Sigmoid colon (tissue), 7 donors: ENCODE measurements at regions of chr7 and their contacts with region 1.

Region 1: GRCh38 chr7:44123190-44124003 is at the start of gene POLD2:
- DNase-seq: peak; percentile 99
- H3K4me3 ChIP-seq: peak within 1 kb of the TSS; percentile 65 to 80 (median 69)
- H3K27ac ChIP-seq: peak within 1 kb of the TSS; percentile 83 to 92 (median 89)
- H3K4me1 ChIP-seq: peaks cover 0 to 19% (median 12%) of the 10 kb centered on the region in 4 donors
- H3K27me3 ChIP-seq: no peaks in the 10 kb centered on the region
- CTCF ChIP-seq: no peak
- EP300 ChIP-seq: no peak
- POLR2A ChIP-seq: peak; percentile 43 to 55
- total RNA-seq, gene POLD2: 20.3 to 40.5 (median 29.5) TPM

Region 2: DNA sequence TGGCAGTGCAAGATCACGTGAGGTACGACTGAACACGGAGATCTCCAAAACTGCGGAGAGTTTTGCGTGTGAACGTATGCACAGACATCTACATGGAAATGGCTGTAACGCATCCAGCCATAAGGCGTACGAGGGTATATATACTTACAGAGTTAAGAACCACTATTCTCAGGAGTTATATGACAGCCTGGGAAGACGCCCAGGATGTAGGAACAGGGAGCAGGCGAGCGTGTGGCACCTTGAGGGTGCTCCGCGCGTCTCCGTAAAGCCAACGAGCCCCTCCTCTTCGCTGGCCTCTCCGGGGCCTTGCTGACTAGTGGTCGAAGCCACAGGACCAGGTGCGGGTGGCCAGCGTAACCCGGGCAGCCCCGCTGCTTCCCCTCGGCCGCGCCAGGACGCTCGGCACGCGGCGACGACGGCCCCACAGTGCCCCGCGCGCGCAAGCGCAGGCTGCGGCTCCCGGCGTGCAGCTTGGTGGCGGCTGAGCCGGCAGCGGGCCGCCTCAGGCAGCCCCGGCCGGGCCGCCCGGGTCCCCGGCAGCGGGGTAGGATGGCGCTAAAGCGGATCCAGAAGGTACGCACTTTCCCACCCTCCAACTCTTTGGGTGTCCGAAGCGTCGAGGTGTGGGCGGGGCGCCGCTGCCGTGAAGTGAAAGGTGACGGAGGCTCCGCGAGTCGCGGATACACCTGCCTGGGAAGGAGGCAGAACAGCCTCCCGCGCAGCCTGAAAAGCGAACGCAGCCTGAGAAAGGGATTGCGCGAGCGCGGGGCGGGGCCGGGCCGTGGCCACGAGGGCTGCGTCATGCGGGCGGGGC is 197.2 kb before region 1 on chr7 and contains the start of gene UBE2D4:
- intact Hi-C with region 1: loop called (anchors 5 kb)
- DNase-seq: peak; percentile 93
- H3K4me3 ChIP-seq: peak within 1 kb of the TSS; percentile 49 to 66 (median 64)
- H3K27ac ChIP-seq: peak within 1 kb of the TSS; percentile 86 to 95 (median 92)
- H3K4me1 ChIP-seq: peaks cover 0 to 19% (median 12%) of the 10 kb centered on the region in 4 donors
- H3K27me3 ChIP-seq: no peaks in the 10 kb centered on the region
- CTCF ChIP-seq: no peak
- EP300 ChIP-seq: no peak
- POLR2A ChIP-seq: peak; percentile 95 to 96
- total RNA-seq, gene UBE2D4: 24.0 to 37.1 (median 28.5) TPM

Region 3: GRCh38 chr7:44072364-44073231 is 50.8 kb before region 1 on chr7:
- intact Hi-C with region 1: no loop called
- DNase-seq: peak; percentile 90
- H3K4me3 ChIP-seq: no peak overlapping the region
- H3K27ac ChIP-seq: peak overlapping the region; percentile 60 to 77 (median 62)
- H3K4me1 ChIP-seq: peaks cover 0 to 26% (median 24%) of the 10 kb centered on the region in 4 donors
- H3K27me3 ChIP-seq: no peaks in the 10 kb centered on the region
- CTCF ChIP-seq: peak; percentile 40 to 61 (median 48)
- EP300 ChIP-seq: no peak
- POLR2A ChIP-seq: no peak

Region 4: DNA sequence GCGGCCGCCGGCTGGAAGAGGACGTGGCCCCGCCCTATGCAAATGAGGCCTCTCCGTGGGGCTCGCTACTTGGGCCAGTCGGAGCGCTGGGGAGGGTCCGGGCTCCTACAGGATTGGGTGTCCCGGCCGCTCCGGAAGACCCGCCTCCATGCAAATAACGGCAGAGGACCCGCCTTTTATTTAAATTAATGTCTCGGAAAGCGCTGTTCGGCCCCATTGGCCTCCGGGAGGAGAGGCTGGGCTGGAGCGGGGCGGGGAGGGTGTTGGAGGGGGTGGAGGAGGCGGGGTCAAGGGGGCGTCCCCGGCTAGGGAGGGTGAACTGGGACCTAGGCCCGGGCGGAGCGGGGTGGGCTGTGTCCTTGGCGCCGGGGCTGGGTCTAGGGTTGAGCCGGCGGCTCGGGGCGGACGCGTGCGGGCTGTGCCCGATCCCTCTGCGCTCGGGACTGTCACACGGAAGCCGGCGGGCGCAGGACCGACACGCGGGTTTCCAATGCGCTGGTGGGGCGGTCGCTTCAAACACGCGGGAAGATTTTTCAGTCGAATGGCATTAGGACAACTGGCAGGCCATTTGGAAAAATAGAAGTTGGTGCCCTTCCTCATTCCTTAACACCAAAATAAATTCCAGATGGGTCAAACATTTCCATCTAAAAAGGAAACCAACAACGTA is 40.7 kb before region 1 on chr7:
- intact Hi-C with region 1: loop called (anchors 1 kb)
- DNase-seq: peak; percentile 100
- H3K4me3 ChIP-seq: peak overlapping the region; percentile 64 to 83 (median 77)
- H3K27ac ChIP-seq: peak overlapping the region; percentile 88 to 91 (median 89)
- H3K4me1 ChIP-seq: peaks cover 0 to 25% (median 14%) of the 10 kb centered on the region in 4 donors
- H3K27me3 ChIP-seq: no peaks in the 10 kb centered on the region
- CTCF ChIP-seq: no peak
- EP300 ChIP-seq: no peak
- POLR2A ChIP-seq: peak in 1 of 2 donors; percentile 61

Region 5: GRCh38 chr7:44200647-44201461 is 77.5 kb after region 1 on chr7 and contains the start of gene YKT6:
- intact Hi-C with region 1: loop called (anchors 5 kb)
- DNase-seq: peak; percentile 97
- H3K4me3 ChIP-seq: peak within 1 kb of the TSS; percentile 80 to 99 (median 90)
- H3K27ac ChIP-seq: peak within 1 kb of the TSS; percentile 78 to 86 (median 80)
- H3K4me1 ChIP-seq: peaks cover 0 to 17% (median 14%) of the 10 kb centered on the region in 4 donors
- H3K27me3 ChIP-seq: peaks cover 0 to 7% (median 0%) of the 10 kb centered on the region in 3 donors
- CTCF ChIP-seq: peak; percentile 37 to 69 (median 54)
- EP300 ChIP-seq: no peak
- POLR2A ChIP-seq: peak; percentile 30 to 63
- total RNA-seq, gene YKT6: 39.2 to 50.1 (median 44.5) TPM